ENCODE measurements at regions of chr15 and their contacts with region 1.

Region 1: DNA sequence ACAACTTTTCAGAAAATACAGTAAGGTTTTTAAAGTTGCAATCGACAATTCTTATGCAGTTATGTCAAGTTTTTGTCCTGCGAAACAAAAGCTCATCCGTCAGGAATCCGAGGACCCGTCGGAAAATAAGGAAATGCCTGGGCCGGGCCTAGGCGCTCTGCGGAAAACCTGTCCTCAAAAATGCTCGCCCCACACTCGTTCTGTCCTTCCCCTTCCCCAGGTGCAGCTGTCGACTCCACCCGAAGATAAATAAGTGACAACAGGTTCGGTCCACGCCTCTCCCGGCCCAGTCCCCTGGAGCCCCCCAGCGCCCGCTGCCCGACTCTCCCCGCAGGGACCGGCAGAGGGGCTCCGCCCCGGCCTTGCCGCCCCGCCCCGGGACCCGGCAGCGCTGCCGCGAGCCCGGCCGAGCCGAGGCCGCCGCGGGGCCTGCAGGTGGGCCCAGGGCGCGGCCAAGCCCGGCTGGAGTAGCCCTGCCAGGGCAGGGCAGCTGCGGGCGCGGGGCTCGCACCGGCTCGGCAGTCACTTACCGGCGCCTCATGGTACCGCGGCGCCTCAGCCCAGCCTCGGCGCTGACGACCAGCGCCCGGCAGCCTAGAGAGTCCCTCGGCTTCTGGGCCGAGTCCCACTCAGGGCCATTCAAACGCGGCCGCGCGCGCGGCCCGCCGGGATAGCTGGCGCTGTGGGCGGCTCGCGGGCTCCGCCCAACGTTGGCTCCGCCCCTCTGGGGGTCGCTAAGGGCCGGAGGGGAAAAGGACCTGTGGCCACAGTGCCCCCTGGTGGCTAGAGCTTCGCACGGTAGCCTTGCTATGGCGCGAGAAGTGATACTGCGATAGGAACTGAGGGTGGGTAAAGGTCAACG is at the start of gene KATNBL1:
- DNase-seq: peak; percentile 98
- H3K4me3 Mint-ChIP-seq: peak within 1 kb of the TSS; percentile 87
- H3K27ac Mint-ChIP-seq: peak within 1 kb of the TSS; percentile 68
- H3K4me1 Mint-ChIP-seq: peaks cover 24% of the 10 kb centered on the region
- H3K27me3 Mint-ChIP-seq: no peaks in the 10 kb centered on the region
- total RNA-seq, gene KATNBL1: 46.4 to 51.6 TPM

Region 2: DNA sequence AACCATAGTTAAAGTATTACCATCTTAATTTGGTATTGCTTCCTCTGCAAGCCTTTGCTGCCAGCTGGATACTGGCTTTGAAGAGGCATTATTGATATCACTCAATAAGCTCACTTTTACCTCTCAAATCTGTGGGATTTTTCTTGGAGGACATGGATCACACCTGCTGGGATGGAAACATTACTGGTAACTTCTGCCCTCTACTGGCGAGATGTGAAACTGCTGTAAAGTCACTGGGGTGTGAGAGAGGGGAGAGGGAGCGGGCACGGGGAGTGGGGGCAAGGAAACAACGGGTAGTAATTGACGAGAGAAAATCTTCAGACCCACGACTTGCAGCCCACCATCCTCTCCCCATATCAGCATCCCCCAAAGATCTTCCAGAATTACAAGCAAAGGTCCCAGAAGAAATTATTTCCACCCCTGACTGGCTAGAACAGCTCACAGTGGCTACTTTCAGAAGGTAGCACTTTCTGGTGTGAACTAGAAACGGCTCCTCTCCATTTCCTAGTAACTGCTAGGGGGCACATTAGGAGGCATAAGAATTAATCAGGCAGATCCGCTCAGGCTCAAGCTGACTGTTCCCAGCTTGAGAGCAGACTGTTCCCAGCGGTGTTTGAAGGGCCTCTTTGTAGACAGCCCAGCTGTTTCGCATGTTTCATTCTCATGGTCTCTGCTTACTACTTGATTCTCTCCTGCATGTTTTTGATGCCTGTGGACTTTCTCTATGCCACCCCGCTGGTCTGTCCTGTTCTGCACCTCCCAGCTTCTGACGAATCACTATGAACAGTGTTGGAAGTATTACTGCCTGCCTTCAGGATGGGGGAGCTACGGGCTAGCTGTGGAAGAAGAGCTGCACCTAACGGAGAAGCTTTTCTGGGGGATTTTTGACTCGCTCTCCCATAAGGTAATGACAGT is 471.7 kb before region 1 on chr15:
- CTCF ChIA-PET with region 1: no interaction called
- intact Hi-C with region 1: loop called (anchors 10 kb)
- DNase-seq: peak; percentile 56
- H3K4me3 Mint-ChIP-seq: no peak overlapping the region
- H3K27ac Mint-ChIP-seq: no peak overlapping the region
- H3K4me1 Mint-ChIP-seq: no peaks in the 10 kb centered on the region
- H3K27me3 Mint-ChIP-seq: peaks cover 5% of the 10 kb centered on the region

Region 3: GRCh38 chr15:34018021-34018645 is 191.5 kb before region 1 on chr15:
- CTCF ChIA-PET with region 1: no interaction called
- intact Hi-C with region 1: no loop called
- DNase-seq: peak; percentile 37
- H3K4me3 Mint-ChIP-seq: peak overlapping the region; percentile 50
- H3K27ac Mint-ChIP-seq: no peak overlapping the region
- H3K4me1 Mint-ChIP-seq: peaks cover 14% of the 10 kb centered on the region
- H3K27me3 Mint-ChIP-seq: no peaks in the 10 kb centered on the region

Region 4: GRCh38 chr15:34056936-34057335 is 152.7 kb before region 1 on chr15:
- CTCF ChIA-PET with region 1: interaction called, 59 read pairs
- intact Hi-C with region 1: loop called (anchors 2 kb)
- DNase-seq: no peak
- H3K4me3 Mint-ChIP-seq: no peak overlapping the region
- H3K27ac Mint-ChIP-seq: no peak overlapping the region
- H3K4me1 Mint-ChIP-seq: no peaks in the 10 kb centered on the region
- H3K27me3 Mint-ChIP-seq: no peaks in the 10 kb centered on the region

Region 5: DNA sequence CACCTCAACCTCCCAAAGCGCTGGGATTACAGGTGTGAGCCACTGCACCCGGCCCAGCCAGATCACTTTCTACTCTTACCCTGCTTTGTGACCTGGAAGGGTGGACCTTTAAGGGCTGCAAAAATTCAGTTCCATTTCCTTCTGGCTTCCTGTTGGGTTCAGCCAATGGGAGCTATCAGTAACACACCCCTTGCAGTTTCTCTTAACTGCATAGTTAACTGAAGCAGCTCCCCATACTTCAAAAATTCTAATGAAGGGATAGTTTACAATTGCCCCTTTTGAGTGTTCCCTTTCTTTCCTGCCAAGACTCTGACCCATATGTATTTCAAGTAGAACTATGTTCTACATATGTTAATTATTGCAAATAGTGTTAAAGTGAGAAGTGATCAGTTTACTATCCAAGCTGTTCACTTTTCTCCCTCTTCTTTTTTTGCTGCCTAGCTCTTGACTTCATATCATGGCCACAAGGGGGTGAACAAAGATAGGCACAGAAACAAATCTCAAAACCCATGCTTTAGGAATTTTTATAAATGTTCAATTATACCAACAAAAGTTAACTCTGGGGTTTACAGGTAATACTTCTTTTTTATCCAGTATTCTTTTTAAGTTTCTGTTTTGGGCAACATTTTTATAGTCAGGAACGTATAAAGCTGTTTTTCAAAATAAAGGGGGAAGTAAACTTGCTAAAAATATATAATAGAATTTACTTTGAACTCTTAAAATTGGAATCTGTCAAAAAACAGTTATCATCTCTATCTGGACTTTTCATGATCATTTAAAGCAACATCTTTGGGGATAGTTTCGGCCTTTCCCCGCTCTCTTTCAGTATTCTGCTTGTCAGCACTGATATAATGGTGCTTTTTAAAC is 99.6 kb before region 1 on chr15:
- CTCF ChIA-PET with region 1: interaction called, 68 read pairs
- intact Hi-C with region 1: loop called (anchors 1 kb)
- DNase-seq: peak; percentile 12
- H3K4me3 Mint-ChIP-seq: no peak overlapping the region
- H3K27ac Mint-ChIP-seq: no peak overlapping the region
- H3K4me1 Mint-ChIP-seq: no peaks in the 10 kb centered on the region
- H3K27me3 Mint-ChIP-seq: no peaks in the 10 kb centered on the region

Measured in activated naive CD4-positive, alpha-beta T cell treated with anti-CD3 and anti-CD28 coated beads for 36 hours (primary cell).